ENCODE measurements at regions of chr21 and their contacts with region 1.

Region 1: DNA sequence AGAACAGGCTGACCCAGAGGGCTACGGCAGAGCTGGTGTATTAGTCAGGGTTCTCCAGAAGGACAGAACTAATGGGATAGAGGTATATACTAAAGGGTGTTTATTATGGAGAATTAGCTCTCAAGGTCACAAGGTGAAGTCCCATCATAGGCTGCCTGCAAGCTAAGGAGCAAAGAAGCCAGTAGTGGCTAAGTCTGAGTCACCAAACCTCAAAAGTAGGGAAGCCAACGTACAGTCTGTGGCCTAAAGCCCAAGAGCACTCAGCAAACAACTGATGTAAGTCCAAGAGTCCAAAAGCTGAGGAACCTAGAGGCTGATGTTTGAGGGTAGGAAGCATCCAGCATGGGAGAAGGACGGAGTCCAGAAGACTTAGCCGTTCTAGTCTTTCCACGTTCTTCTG is 179.2 kb downstream of the BACH1 start:
- DNase-seq: no peak
- ATAC-seq: no peak
- H3K4me3 ChIP-seq: no peak overlapping the region
- H3K27ac ChIP-seq: no peak overlapping the region
- H3K4me1 ChIP-seq: peaks cover 0 to 5% (median 0%) of the 10 kb centered on the region in 9 donors
- H3K27me3 ChIP-seq: no peaks in the 10 kb centered on the region
- CTCF ChIP-seq: no peak

Region 2: DNA sequence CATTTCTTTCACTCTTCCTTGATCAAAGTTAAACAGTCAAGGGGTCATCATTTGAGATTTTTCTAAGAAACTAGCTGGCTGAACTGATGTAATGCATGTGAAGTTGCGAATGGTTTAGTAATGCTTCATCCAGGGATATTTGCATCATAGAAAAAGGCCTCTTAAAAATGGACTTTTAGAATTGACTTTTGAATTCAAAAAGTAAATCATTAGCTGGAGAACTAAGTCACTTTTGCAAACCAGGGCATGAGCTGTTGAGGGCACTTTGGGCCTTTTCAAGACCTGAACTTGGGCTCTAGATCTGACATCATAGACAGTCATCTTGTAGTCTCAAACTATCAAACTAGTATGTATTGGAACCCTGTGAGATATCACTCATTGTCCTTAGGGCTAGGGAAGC is 376.9 kb after region 1 on chr21:
- intact Hi-C with region 1: loop called (anchors 1 to 10 kb)
- DNase-seq: no peak
- ATAC-seq: no peak
- H3K4me3 ChIP-seq: no peak overlapping the region
- H3K27ac ChIP-seq: no peak overlapping the region
- H3K4me1 ChIP-seq: no peaks in the 10 kb centered on the region
- H3K27me3 ChIP-seq: peaks cover 0 to 2% (median 0%) of the 10 kb centered on the region in 7 donors
- CTCF ChIP-seq: no peak